ENCODE measurements at regions of chr17 and their contacts with region 1.

Region 1: DNA sequence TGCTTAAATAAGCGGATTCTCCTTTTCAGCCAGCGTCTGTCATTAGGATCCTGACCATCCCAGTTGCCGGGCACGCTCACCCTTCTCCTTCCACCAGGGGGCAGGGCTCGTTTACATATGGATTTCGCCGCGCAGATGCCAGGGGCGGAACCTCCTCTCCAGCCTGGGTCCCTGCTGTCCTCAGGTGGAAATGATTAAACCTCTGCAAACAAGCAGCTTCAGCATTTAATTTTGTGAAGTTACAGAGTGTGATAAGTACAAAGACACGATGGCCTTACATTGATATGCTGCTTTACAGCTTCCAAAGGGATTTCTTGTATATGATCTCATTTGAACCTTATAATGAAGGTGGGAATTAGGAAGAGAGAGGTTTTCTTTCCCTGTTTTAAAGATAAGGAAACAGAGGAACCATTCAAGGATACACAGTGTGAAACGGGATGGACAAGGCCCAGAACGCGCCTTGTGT is 3.9 kb upstream of the KRT28 start:
- DNase-seq: peak; percentile 59 to 75 (median 62)
- H3K4me3 ChIP-seq: no peak overlapping the region
- H3K4me3 Mint-ChIP-seq: no peak overlapping the region
- H3K27ac ChIP-seq: no peak overlapping the region
- H3K27ac Mint-ChIP-seq: no peak overlapping the region
- H3K4me1 ChIP-seq: peaks cover 4% of the 10 kb centered on the region
- H3K4me1 Mint-ChIP-seq: peaks cover 2 to 4% (median 3%) of the 10 kb centered on the region in 4 donors
- H3K27me3 ChIP-seq: peaks cover 11% of the 10 kb centered on the region
- H3K27me3 Mint-ChIP-seq: peaks cover 19 to 34% of the 10 kb centered on the region in 2 donors

Region 2: GRCh38 chr17:40854159-40854814 is 50.6 kb after region 1 on chr17:
- CTCF ChIA-PET with region 1: interaction called, 4 read pairs
- POLR2A ChIA-PET with region 1: no interaction called
- intact Hi-C with region 1: loop called (anchors 5 kb)
- DNase-seq: no peak
- H3K4me3 ChIP-seq: no peak overlapping the region
- H3K4me3 Mint-ChIP-seq: no peak overlapping the region
- H3K27ac ChIP-seq: no peak overlapping the region
- H3K27ac Mint-ChIP-seq: no peak overlapping the region
- H3K4me1 ChIP-seq: no peaks in the 10 kb centered on the region
- H3K4me1 Mint-ChIP-seq: peaks cover 0 to 4% (median 2%) of the 10 kb centered on the region in 4 donors
- H3K27me3 ChIP-seq: no peaks in the 10 kb centered on the region
- H3K27me3 Mint-ChIP-seq: peaks cover 8 to 10% of the 10 kb centered on the region in 2 donors

Region 3: GRCh38 chr17:40909351-40909750 is 105.7 kb after region 1 on chr17:
- CTCF ChIA-PET with region 1: interaction called, 3 read pairs
- POLR2A ChIA-PET with region 1: no interaction called
- intact Hi-C with region 1: loop called (anchors 2 kb)
- DNase-seq: peak; percentile 48 to 69 (median 60)
- H3K4me3 ChIP-seq: no peak overlapping the region
- H3K4me3 Mint-ChIP-seq: no peak overlapping the region
- H3K27ac ChIP-seq: no peak overlapping the region
- H3K27ac Mint-ChIP-seq: no peak overlapping the region
- H3K4me1 ChIP-seq: no peaks in the 10 kb centered on the region
- H3K4me1 Mint-ChIP-seq: no peaks in the 10 kb centered on the region
- H3K27me3 ChIP-seq: no peaks in the 10 kb centered on the region
- H3K27me3 Mint-ChIP-seq: peaks cover 23 to 39% of the 10 kb centered on the region in 2 donors